GM12878 (cell line): ENCODE measurements at regions of chr9 and their contacts with region 1.

Region 1: GRCh38 chr9:128117613-128118471 is 9.7 kb downstream of the PTGES2 start:
- DNase-seq: no peak
- ATAC-seq: peak; percentile 79
- H3K4me3 ChIP-seq: no peak overlapping the region
- H3K27ac ChIP-seq: no peak overlapping the region
- H3K4me1 ChIP-seq: peaks cover 23% of the 10 kb centered on the region
- H3K27me3 ChIP-seq: no peaks in the 10 kb centered on the region
- CTCF ChIP-seq: peak; percentile 100; a peak in 5 of 6 replicates
- EP300 ChIP-seq: no peak
- POLR2A ChIP-seq: peak; percentile 65
- RAD21 ChIP-seq: peak; percentile 99

Region 2: GRCh38 chr9:127035951-127036350 is 1081.9 kb before region 1 on chr9:
- CTCF ChIA-PET with region 1: no interaction called
- POLR2A ChIA-PET with region 1: no interaction called
- RAD21 ChIA-PET with region 1: no interaction called
- SMC1A ChIA-PET with region 1: no interaction called
- in situ Hi-C with region 1: no loop called
- intact Hi-C with region 1: no loop called
- DNase-seq: no peak
- ATAC-seq: no peak
- H3K4me3 ChIP-seq: no peak overlapping the region
- H3K27ac ChIP-seq: no peak overlapping the region
- H3K4me1 ChIP-seq: no peaks in the 10 kb centered on the region
- H3K27me3 ChIP-seq: no peaks in the 10 kb centered on the region
- CTCF ChIP-seq: no peak
- EP300 ChIP-seq: no peak
- POLR2A ChIP-seq: no peak
- RAD21 ChIP-seq: no peak

Region 3: GRCh38 chr9:128088253-128088945 is 29.4 kb before region 1 on chr9:
- CTCF ChIA-PET with region 1: interaction called, 19 read pairs
- POLR2A ChIA-PET with region 1: interaction called, 3 read pairs
- RAD21 ChIA-PET with region 1: no interaction called
- SMC1A ChIA-PET with region 1: interaction called, 11 read pairs
- in situ Hi-C with region 1: no loop called
- intact Hi-C with region 1: no loop called
- DNase-seq: no peak
- ATAC-seq: no peak
- H3K4me3 ChIP-seq: no peak overlapping the region
- H3K27ac ChIP-seq: no peak overlapping the region
- H3K4me1 ChIP-seq: peaks cover 9% of the 10 kb centered on the region
- H3K27me3 ChIP-seq: no peaks in the 10 kb centered on the region
- CTCF ChIP-seq: no peak
- EP300 ChIP-seq: no peak
- POLR2A ChIP-seq: no peak
- RAD21 ChIP-seq: no peak

Region 4: DNA sequence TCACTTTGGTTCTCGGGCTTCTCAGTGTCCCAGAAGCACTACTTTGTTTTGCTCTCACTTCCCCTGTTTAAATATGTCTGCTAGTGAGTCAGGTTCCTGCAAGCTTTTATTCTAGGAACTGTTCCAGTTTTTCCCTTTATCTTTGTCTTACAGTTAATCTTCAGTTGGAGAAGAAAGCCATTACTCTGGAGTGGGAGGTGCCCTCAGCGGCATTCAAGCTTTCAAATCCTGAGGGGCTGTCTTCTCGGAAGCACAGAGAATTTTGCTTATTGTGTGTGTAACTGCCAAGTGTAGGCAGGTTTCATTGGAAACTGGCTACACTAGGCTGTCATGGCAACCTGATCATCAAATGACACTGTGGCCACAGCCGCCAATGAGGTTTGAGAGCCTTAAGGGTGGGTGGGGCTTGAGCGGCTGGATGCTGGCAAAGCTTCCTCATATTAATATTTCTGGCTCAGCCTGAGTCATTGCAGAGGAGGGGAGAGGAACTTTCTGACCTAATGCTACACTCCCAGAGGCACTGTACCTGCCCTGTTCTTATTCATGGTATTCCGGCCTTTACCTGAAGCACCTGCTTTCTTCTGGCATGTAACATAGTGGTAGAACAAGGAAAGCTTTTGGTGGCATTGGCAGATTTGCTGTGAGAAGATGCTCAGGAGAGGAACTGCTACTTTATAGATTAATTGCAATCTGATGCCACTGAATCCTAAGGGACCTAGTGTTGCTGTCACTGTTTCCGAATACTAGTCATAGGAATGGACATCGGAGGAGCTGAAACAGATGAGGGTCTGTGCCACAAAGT is 23.5 kb before region 1 on chr9:
- CTCF ChIA-PET with region 1: interaction called, 19 read pairs
- POLR2A ChIA-PET with region 1: interaction called, 3 read pairs
- RAD21 ChIA-PET with region 1: interaction called, 6 read pairs
- SMC1A ChIA-PET with region 1: interaction called, 11 read pairs
- in situ Hi-C with region 1: no loop called
- intact Hi-C with region 1: no loop called
- DNase-seq: no peak
- ATAC-seq: peak; percentile 99
- H3K4me3 ChIP-seq: no peak overlapping the region
- H3K27ac ChIP-seq: peak overlapping the region; percentile 51
- H3K4me1 ChIP-seq: peaks cover 25% of the 10 kb centered on the region
- H3K27me3 ChIP-seq: no peaks in the 10 kb centered on the region
- CTCF ChIP-seq: no peak
- EP300 ChIP-seq: no peak
- POLR2A ChIP-seq: no peak
- RAD21 ChIP-seq: no peak

Region 5: DNA sequence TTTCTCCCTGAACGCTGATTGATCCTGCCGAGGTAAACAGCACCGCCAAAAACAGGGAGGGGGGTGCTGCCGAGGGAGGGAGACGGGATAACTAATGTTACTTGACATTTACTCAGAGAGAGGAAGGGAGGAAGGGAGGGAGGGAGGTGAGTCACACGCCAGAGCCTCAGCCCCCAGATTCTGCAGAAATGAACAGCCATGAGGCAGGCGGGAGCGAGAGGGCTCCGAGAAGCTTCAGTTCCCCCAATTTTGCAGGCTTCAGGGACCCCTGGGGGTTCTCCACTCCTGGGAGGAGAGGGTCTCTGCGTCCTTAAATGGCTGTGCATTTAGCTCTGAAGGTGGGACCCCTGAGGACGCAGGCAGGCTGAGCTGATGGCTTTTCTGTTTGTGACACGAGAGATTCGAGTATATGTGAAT is 1119.4 kb after region 1 on chr9:
- CTCF ChIA-PET with region 1: no interaction called
- POLR2A ChIA-PET with region 1: no interaction called
- RAD21 ChIA-PET with region 1: no interaction called
- SMC1A ChIA-PET with region 1: no interaction called
- in situ Hi-C with region 1: no loop called
- intact Hi-C with region 1: no loop called
- DNase-seq: no peak
- ATAC-seq: no peak
- H3K4me3 ChIP-seq: no peak overlapping the region
- H3K27ac ChIP-seq: no peak overlapping the region
- H3K4me1 ChIP-seq: peaks cover 9% of the 10 kb centered on the region
- H3K27me3 ChIP-seq: no peaks in the 10 kb centered on the region; a peak in 1 of 4 replicates
- CTCF ChIP-seq: no peak
- EP300 ChIP-seq: no peak
- POLR2A ChIP-seq: no peak
- RAD21 ChIP-seq: no peak